Dorsolateral prefrontal cortex (tissue), 120 donors: ENCODE measurements at regions of chr14 and their contacts with region 1.

Region 1: GRCh38 chr14:102774391-102775153 is 2.7 kb upstream of the TRAF3 start:
- DNase-seq: peak in 5 of 10 donors; percentile 58 to 81 (median 69)
- H3K4me3 ChIP-seq: peak overlapping the region in 2 of 59 donors; percentile 8 to 11
- H3K27ac ChIP-seq: peak overlapping the region in 34 of 59 donors; percentile 1 to 83 (median 55)
- H3K27me3 ChIP-seq: no peaks in the 10 kb centered on the region
- CTCF ChIP-seq: peak; percentile 59 to 84 (median 75)

Region 2: GRCh38 chr14:102591889-102592763 is 182.4 kb before region 1 on chr14 and contains the start of gene RCOR1:
- intact Hi-C with region 1: loop called (anchors 5 to 10 kb)
- DNase-seq: peak; percentile 96 to 99 (median 98)
- H3K4me3 ChIP-seq: peak within 1 kb of the TSS; percentile 64 to 98 (median 90)
- H3K27ac ChIP-seq: peak within 1 kb of the TSS; percentile 70 to 99 (median 95)
- H3K27me3 ChIP-seq: no peaks in the 10 kb centered on the region
- CTCF ChIP-seq: peak in 25 of 56 donors; percentile 7 to 55 (median 20)
- total RNA-seq, gene RCOR1: 8.6 to 24.0 (median 13.3) TPM

Region 3: DNA sequence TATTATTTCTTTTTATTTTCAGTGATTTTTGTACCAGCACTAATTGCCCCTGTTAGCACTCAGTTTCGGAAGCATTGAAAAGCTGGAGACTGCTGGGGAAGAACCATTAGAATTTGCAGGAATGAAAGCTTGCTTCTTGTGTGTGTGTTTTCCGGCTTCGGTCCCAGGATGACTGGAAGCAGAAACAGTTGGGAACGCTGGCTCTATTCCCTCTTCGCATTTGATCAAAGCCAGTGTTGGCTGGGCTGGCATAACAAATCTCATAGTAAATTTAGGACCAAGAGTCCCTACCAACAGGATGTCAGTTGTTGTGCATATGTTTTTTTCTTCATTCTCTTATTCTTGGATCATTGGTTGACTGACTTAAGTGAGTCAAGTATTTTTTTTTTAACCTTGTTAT is 50.9 kb before region 1 on chr14:
- intact Hi-C with region 1: loop called in 1 of 2 experiments (anchors 5 kb)
- DNase-seq: peak in 3 of 10 donors; percentile 44 to 59 (median 50)
- H3K4me3 ChIP-seq: no peak overlapping the region
- H3K27ac ChIP-seq: peak overlapping the region in 42 of 59 donors; percentile 3 to 85 (median 48)
- H3K27me3 ChIP-seq: no peaks in the 10 kb centered on the region
- CTCF ChIP-seq: no peak

Region 4: GRCh38 chr14:102973706-102974285 is 199.2 kb after region 1 on chr14:
- intact Hi-C with region 1: loop called in 1 of 2 experiments (anchors 10 kb)
- DNase-seq: peak in 3 of 10 donors; percentile 41 to 72 (median 55)
- H3K4me3 ChIP-seq: no peak overlapping the region
- H3K27ac ChIP-seq: peak overlapping the region in 11 of 59 donors; percentile 8 to 62 (median 36)
- H3K27me3 ChIP-seq: no peaks in the 10 kb centered on the region
- CTCF ChIP-seq: no peak

Region 5: GRCh38 chr14:103057365-103058096 is 283.0 kb after region 1 on chr14 and contains the start of gene CDC42BPB:
- intact Hi-C with region 1: loop called in 1 of 2 experiments (anchors 10 kb)
- DNase-seq: peak; percentile 64 to 93 (median 82)
- H3K4me3 ChIP-seq: peak within 1 kb of the TSS; percentile 81 to 100 (median 95)
- H3K27ac ChIP-seq: peak within 1 kb of the TSS; percentile 51 to 94 (median 86)
- H3K27me3 ChIP-seq: no peaks in the 10 kb centered on the region
- CTCF ChIP-seq: peak in 21 of 56 donors; percentile 5 to 40 (median 17)
- total RNA-seq, gene CDC42BPB: 112 to 178 (median 140) TPM

Region 6: GRCh38 chr14:103568952-103569351 is 794.4 kb after region 1 on chr14:
- intact Hi-C with region 1: no loop called
- DNase-seq: no peak
- H3K4me3 ChIP-seq: no peak overlapping the region
- H3K27ac ChIP-seq: peak overlapping the region in 19 of 59 donors; percentile 2 to 57 (median 36)
- H3K27me3 ChIP-seq: no peaks in the 10 kb centered on the region
- CTCF ChIP-seq: no peak